B cell (primary cell): ENCODE measurements at regions of chr11 and their contacts with region 1.

Region 1: DNA sequence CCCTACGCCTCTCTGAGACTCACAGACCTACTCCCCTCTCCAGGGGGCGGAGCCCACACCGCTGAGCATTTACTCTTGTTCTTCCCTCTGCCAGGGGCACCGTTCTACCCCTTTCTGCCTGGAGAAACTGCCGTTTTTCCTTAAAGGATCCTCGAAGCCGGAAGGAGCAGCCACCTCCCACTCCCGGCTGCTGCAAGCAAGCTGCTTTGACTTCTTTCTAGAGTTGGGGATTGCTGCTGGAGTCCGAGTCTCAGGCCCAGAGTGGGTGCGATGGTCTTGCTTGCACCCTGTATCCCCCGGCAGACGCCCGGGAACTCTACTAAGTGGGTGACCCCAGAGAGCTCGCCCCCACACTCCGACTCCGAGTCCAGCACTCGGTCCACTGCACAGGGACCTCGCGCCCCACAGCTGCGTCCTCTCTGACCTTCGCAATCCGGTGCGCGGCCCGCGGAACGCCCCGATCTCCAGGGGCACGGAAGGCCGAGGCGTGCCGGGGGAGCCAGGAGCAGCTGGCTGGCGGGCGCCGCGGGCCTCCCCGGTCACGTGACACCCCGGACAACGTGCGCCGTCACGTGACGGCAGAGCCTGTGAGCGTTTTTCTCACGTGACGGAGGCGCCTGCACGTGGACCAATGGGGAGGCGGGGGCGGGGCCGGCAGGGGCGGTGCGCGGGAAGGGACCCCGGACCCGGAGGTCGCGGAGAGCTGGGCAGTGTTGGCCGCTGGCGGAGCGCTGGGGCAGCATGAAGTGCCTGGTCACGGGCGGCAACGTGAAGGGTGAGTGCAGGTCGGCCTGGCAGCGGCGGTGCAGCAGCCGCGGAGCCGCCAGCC is at the start of gene RAD9A:
- DNase-seq: peak; percentile 96
- ATAC-seq: peak; percentile 83
- H3K4me3 ChIP-seq: peak within 1 kb of the TSS; percentile 63 to 95 (median 81)
- H3K4me3 Mint-ChIP-seq: peak within 1 kb of the TSS; percentile 91
- H3K27ac ChIP-seq: peak within 1 kb of the TSS; percentile 33 to 78
- H3K27ac Mint-ChIP-seq: peak within 1 kb of the TSS; percentile 69
- H3K4me1 ChIP-seq: peaks cover 10 to 29% of the 10 kb centered on the region in 2 donors
- H3K4me1 Mint-ChIP-seq: peaks cover 36% of the 10 kb centered on the region
- H3K27me3 ChIP-seq: no peaks in the 10 kb centered on the region
- H3K27me3 Mint-ChIP-seq: no peaks in the 10 kb centered on the region
- CTCF ChIP-seq: no peak
- total RNA-seq, gene RAD9A: 48.3 and 50.6 TPM in 2 replicates

Region 2: DNA sequence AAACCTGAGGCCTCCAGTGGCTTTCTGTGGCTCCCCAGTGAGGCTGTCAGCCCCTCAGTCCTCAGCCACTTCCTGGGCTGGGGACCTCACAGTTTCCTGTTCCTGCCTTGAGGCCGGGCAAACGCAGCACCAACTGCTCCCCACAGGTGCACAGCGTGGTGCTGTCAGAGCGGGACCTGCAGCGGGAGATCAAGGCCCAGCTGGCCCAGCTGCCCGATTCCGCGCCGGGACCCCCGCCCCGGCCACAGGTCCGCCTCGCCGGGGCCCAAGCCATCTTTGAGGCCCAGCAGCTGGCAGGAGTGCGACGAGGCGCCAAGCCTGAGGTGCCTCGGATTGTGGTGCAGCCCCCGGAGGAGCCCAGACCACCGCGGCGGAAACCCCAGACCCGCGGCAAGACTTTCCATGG is 17.7 kb after region 1 on chr11:
- CTCF ChIA-PET with region 1: interaction called, 3 read pairs
- POLR2A ChIA-PET with region 1: interaction called, 12 read pairs
- intact Hi-C with region 1: no loop called
- DNase-seq: peak; percentile 82
- ATAC-seq: peak; percentile 55
- H3K4me3 ChIP-seq: peak overlapping the region in 4 of 5 experiments; percentile 40 to 80 (median 56)
- H3K4me3 Mint-ChIP-seq: peak overlapping the region; percentile 91
- H3K27ac ChIP-seq: peak overlapping the region; percentile 83 to 88
- H3K27ac Mint-ChIP-seq: peak overlapping the region; percentile 100
- H3K4me1 ChIP-seq: peaks cover 92 to 99% of the 10 kb centered on the region in 2 donors
- H3K4me1 Mint-ChIP-seq: peaks cover 91% of the 10 kb centered on the region
- H3K27me3 ChIP-seq: no peaks in the 10 kb centered on the region
- H3K27me3 Mint-ChIP-seq: no peaks in the 10 kb centered on the region
- CTCF ChIP-seq: no peak

Region 3: DNA sequence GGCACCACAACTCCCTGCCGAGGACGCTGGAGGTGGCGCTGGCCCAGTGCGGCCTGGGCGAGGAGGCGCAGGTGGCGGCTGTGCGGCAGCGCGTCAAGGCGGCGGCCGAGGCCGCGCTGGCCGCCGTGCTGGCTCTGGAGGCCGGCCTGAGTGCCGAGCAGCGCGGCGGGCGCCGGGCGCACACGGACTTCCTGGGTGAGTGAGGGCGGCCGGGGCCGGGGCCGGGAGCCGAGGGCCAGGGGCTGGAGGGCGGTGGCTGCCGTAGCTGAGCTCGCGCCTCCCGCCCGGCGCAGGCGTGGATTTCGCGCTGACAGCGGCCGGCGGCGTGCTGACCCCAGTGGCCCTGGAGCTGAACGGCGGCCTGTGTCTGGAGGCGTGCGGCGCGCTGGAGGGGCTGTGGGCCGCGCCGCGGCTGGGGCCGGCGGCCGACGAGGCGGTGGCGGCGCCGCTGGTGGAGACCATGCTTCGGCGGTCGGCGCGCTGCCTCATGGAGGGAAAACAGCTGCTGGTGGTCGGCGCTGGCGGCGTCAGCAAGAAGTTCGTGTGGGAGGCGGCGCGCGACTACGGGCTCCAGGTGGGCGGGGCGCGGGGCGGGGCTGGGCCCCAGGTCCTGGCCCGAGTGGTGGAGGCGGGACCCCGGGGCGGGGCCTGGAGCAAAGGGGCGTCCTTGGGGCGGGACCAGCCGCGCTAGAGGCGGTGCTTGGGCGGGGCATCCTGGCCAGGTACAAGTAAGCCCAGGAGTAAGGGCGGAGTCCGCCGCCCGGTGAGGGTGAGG is 29.3 kb after region 1 on chr11:
- CTCF ChIA-PET with region 1: interaction called, 8 read pairs
- POLR2A ChIA-PET with region 1: interaction called, 15 read pairs
- intact Hi-C with region 1: no loop called
- DNase-seq: peak; percentile 98
- ATAC-seq: peak; percentile 85
- H3K4me3 ChIP-seq: peak overlapping the region in 4 of 5 experiments; percentile 32 to 63 (median 53)
- H3K4me3 Mint-ChIP-seq: peak overlapping the region; percentile 83
- H3K27ac ChIP-seq: peak overlapping the region; percentile 43 to 71
- H3K27ac Mint-ChIP-seq: peak overlapping the region; percentile 91
- H3K4me1 ChIP-seq: peaks cover 49 to 54% of the 10 kb centered on the region in 2 donors
- H3K4me1 Mint-ChIP-seq: peaks cover 50% of the 10 kb centered on the region
- H3K27me3 ChIP-seq: no peaks in the 10 kb centered on the region
- H3K27me3 Mint-ChIP-seq: no peaks in the 10 kb centered on the region
- CTCF ChIP-seq: no peak

Region 4: GRCh38 chr11:67428052-67428914 is 36.8 kb after region 1 on chr11 and contains the start of gene RPS6KB2:
- CTCF ChIA-PET with region 1: no interaction called
- POLR2A ChIA-PET with region 1: interaction called, 8 read pairs
- intact Hi-C with region 1: loop called (anchors 1 kb)
- DNase-seq: peak; percentile 98
- ATAC-seq: peak; percentile 86
- H3K4me3 ChIP-seq: peak within 1 kb of the TSS; percentile 82 to 95 (median 91)
- H3K4me3 Mint-ChIP-seq: peak within 1 kb of the TSS; percentile 99
- H3K27ac ChIP-seq: peak within 1 kb of the TSS; percentile 70 to 92
- H3K27ac Mint-ChIP-seq: peak within 1 kb of the TSS; percentile 96
- H3K4me1 ChIP-seq: peaks cover 13 to 46% of the 10 kb centered on the region in 2 donors
- H3K4me1 Mint-ChIP-seq: peaks cover 41% of the 10 kb centered on the region
- H3K27me3 ChIP-seq: no peaks in the 10 kb centered on the region
- H3K27me3 Mint-ChIP-seq: no peaks in the 10 kb centered on the region
- CTCF ChIP-seq: no peak
- total RNA-seq, gene RPS6KB2: 81.8 and 82.0 TPM in 2 replicates

Region 5: DNA sequence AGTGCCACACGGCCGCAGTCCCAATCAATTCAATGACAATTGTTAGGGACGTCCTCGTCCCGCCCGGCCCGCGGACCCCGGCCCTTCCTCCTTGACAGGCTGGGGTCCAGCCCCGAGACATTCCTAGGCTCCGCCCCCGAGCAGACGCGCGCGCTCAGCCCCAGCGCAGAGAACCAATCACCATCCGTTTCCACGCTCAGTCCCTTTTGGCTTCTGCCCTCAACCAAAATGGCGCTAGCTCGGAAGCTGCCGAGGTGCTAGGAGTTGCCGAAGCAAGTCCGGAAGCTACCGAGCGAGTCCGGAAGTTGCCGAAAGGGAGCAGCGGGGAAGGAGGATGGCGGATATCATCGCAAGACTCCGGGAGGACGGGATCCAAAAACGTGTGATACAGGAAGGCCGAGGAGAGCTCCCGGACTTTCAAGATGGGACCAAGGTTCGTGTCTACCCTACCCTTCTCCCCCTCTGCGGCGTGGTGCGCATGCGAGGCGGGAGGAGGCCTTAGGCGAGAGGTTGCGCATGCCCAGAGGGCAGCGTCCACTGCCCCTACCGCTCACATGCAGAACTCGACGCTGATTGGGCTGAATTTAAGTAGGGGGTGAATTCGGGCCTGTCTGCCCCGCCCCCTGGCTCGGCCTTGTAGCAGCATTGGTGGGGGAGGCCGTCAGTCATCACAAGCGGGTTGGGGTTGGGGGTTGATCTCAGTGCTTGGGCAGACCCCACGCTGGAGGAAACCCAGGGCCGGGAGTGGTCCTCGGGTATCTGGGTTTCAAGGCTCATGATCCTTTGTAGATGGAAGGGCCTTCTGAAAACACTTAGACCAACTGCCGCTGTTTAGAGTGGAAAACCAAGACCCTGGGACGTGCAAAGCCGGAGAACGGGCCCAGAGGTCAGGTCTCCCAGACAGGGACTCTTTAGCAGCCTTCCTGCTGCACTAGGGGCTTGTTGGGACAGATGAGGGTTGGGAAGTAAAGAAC is 91.6 kb after region 1 on chr11 and contains the start of gene AIP:
- CTCF ChIA-PET with region 1: interaction called, 19 read pairs
- POLR2A ChIA-PET with region 1: interaction called, 8 read pairs
- intact Hi-C with region 1: no loop called
- DNase-seq: peak; percentile 98
- ATAC-seq: peak; percentile 87
- H3K4me3 ChIP-seq: peak within 1 kb of the TSS; percentile 56 to 99 (median 68)
- H3K4me3 Mint-ChIP-seq: peak within 1 kb of the TSS; percentile 99
- H3K27ac ChIP-seq: peak within 1 kb of the TSS; percentile 75 to 79
- H3K27ac Mint-ChIP-seq: peak within 1 kb of the TSS; percentile 100
- H3K4me1 ChIP-seq: peaks cover 38 to 56% of the 10 kb centered on the region in 2 donors
- H3K4me1 Mint-ChIP-seq: peaks cover 56% of the 10 kb centered on the region
- H3K27me3 ChIP-seq: no peaks in the 10 kb centered on the region
- H3K27me3 Mint-ChIP-seq: no peaks in the 10 kb centered on the region
- CTCF ChIP-seq: no peak
- total RNA-seq, gene AIP: 120 and 127 TPM in 2 replicates

Region 6: GRCh38 chr11:67534070-67534679 is 142.7 kb after region 1 on chr11:
- CTCF ChIA-PET with region 1: no interaction called
- POLR2A ChIA-PET with region 1: no interaction called
- intact Hi-C with region 1: no loop called
- DNase-seq: no peak
- ATAC-seq: no peak
- H3K4me3 ChIP-seq: no peak overlapping the region
- H3K4me3 Mint-ChIP-seq: no peak overlapping the region
- H3K27ac ChIP-seq: no peak overlapping the region
- H3K27ac Mint-ChIP-seq: no peak overlapping the region
- H3K4me1 ChIP-seq: no peaks in the 10 kb centered on the region
- H3K4me1 Mint-ChIP-seq: no peaks in the 10 kb centered on the region
- H3K27me3 ChIP-seq: peaks cover 0 to 5% (median 0%) of the 10 kb centered on the region in 4 experiments
- H3K27me3 Mint-ChIP-seq: peaks cover 9% of the 10 kb centered on the region
- CTCF ChIP-seq: no peak